Activated CD8-positive, alpha-beta T cell treated with anti-CD3 and anti-CD28 coated beads, Interleukin-2, amount 10 ng/mL, durations not matched to agents 7 days and 5 days (primary cell): ENCODE measurements at regions of chr3 and their contacts with region 1.

Region 1: DNA sequence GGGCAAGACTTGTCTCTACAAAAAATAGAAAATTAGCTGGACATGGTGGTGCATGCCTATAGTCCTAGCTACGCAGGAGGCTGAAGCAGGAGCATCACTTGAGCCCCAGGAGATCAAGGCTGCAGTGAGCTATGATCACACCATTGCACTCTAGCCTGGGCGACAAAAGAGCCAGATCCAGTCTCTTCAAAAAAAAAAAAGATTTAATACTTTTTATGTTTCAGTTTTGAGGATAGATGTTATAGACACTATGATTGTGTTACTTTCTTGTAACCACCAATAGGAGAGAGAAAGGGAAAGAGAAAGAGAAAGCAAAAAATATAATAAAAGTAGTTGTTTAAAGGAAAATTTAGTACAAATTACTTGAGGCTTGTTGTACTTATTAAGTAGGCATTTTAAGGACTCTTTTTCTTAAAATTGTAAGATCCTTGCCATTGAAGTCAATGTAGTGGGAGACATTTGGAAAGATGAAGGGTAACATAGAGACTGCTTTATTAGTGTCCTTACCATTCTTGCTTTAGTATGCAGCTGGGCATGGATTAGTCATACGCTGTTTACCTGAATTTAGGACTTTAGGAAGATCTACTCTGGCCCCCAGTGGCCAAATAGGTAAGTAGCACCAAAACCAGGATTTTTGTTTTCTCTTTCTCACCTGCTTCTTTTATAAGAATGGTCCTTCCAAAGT is 35.1 kb upstream of the ZDHHC23 start:
- DNase-seq: peak; percentile 49
- ATAC-seq: peak; percentile 90
- H3K4me3 Mint-ChIP-seq: peak overlapping the region; percentile 47
- H3K27ac Mint-ChIP-seq: peak overlapping the region; percentile 39
- H3K4me1 Mint-ChIP-seq: peaks cover 3% of the 10 kb centered on the region
- H3K27me3 Mint-ChIP-seq: peaks cover 3% of the 10 kb centered on the region

Region 2: DNA sequence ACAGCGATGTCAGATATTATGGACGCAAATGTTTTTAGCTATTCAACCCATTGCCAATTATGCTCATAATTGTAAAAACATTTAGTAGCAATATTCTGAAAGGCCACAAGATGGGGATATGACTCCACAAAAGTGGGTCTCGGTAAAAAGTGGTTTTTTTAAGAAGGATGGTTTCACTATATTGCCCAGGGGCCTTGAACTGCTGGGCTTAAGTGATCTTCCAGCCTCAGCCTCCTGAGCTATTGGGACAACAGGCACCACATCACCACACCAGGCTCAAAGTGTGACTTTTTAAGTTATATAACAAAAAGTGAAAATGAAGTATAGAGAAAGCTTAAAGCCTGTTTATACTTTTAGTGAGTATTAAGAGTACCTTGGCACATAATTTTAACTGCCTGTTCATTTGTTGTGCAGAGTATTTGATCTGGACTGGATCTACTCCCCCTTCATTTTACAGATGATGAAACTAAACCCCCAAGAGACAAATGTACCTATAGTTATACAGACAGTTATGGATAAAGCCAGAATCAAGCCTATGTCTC is 176.1 kb before region 1 on chr3:
- CTCF ChIA-PET with region 1: interaction called, 17 read pairs
- POLR2A ChIA-PET with region 1: no interaction called
- DNase-seq: peak; percentile 53
- ATAC-seq: peak; percentile 81
- H3K4me3 Mint-ChIP-seq: no peak overlapping the region
- H3K27ac Mint-ChIP-seq: peak overlapping the region; percentile 17
- H3K4me1 Mint-ChIP-seq: peaks cover 45% of the 10 kb centered on the region
- H3K27me3 Mint-ChIP-seq: no peaks in the 10 kb centered on the region

Region 3: GRCh38 chr3:113838631-113839209 is 74.0 kb before region 1 on chr3 and contains the start of gene GRAMD1C:
- CTCF ChIA-PET with region 1: interaction called, 15 read pairs
- POLR2A ChIA-PET with region 1: no interaction called
- DNase-seq: peak; percentile 90
- ATAC-seq: peak; percentile 100
- H3K4me3 Mint-ChIP-seq: peak within 1 kb of the TSS; percentile 75
- H3K27ac Mint-ChIP-seq: no peak within 1 kb of the TSS
- H3K4me1 Mint-ChIP-seq: peaks cover 6% of the 10 kb centered on the region
- H3K27me3 Mint-ChIP-seq: no peaks in the 10 kb centered on the region
- total RNA-seq, gene GRAMD1C: 0.70 to 1.1 TPM

Region 4: DNA sequence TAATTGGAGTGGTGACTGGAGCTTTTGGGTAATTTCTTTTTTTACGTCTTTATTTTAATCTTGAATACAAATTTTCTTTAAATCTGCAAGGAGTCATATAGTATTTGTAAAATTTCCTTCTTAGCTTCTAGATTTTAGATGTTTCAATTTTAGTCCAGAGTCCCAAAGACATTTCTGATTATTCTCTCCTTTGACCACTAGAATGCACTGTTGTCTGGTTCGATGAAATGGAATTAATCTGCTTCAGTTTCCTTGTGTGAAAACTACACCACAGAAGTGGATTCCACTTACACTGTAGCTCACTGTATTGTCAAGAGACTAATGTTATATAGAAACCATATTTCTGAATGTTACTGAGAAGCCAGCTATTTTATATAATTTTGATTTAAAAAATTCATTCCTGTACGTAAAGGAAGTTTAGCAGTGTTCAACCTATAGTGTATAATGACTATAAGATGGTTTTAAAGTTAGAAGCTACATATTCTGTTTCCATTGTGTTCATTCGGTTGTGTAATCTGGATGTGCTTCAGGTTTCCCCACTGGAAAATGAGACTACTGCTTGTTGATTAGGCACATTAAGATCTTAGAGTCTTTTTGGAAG is 68.0 kb before region 1 on chr3:
- CTCF ChIA-PET with region 1: interaction called, 25 read pairs
- POLR2A ChIA-PET with region 1: interaction called, 3 read pairs
- DNase-seq: no peak
- ATAC-seq: peak; percentile 57
- H3K4me3 Mint-ChIP-seq: no peak overlapping the region
- H3K27ac Mint-ChIP-seq: no peak overlapping the region
- H3K4me1 Mint-ChIP-seq: no peaks in the 10 kb centered on the region
- H3K27me3 Mint-ChIP-seq: no peaks in the 10 kb centered on the region

Region 5: DNA sequence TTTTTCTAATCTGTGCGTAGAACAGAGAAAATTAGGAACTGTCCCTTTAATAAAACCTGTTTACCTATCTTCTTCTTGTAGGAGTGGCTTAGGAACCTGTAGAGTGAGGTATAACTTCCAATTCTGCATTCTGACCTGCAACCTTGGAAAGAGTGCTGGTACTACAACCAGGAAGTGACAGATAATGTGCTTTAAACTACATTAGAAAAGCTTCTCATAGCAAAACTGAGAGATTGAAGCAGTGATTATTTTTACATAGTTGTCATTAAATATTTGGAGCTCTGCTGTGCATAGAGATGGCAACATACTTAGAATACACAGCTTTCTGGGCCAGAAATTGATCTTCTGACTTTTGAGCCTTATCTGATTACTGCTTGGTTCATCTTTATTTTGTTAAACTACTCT is 15.3 kb before region 1 on chr3:
- CTCF ChIA-PET with region 1: interaction called, 16 read pairs
- POLR2A ChIA-PET with region 1: no interaction called
- DNase-seq: no peak
- ATAC-seq: no peak
- H3K4me3 Mint-ChIP-seq: no peak overlapping the region
- H3K27ac Mint-ChIP-seq: no peak overlapping the region
- H3K4me1 Mint-ChIP-seq: peaks cover 6% of the 10 kb centered on the region
- H3K27me3 Mint-ChIP-seq: peaks cover 3% of the 10 kb centered on the region

Region 6: GRCh38 chr3:113947372-113948014 is 34.8 kb after region 1 on chr3 and contains the start of gene ZDHHC23:
- CTCF ChIA-PET with region 1: no interaction called
- POLR2A ChIA-PET with region 1: no interaction called
- DNase-seq: peak; percentile 60
- ATAC-seq: peak; percentile 89
- H3K4me3 Mint-ChIP-seq: peak within 1 kb of the TSS; percentile 73
- H3K27ac Mint-ChIP-seq: peak within 1 kb of the TSS; percentile 63
- H3K4me1 Mint-ChIP-seq: peaks cover 12% of the 10 kb centered on the region
- H3K27me3 Mint-ChIP-seq: peaks cover 33% of the 10 kb centered on the region
- total RNA-seq, gene ZDHHC23: 1.8 to 2.1 TPM

Region 7: GRCh38 chr3:114005481-114005880 is 92.8 kb after region 1 on chr3:
- CTCF ChIA-PET with region 1: no interaction called
- POLR2A ChIA-PET with region 1: no interaction called
- DNase-seq: no peak
- ATAC-seq: no peak
- H3K4me3 Mint-ChIP-seq: no peak overlapping the region
- H3K27ac Mint-ChIP-seq: no peak overlapping the region
- H3K4me1 Mint-ChIP-seq: no peaks in the 10 kb centered on the region
- H3K27me3 Mint-ChIP-seq: no peaks in the 10 kb centered on the region